Dorsolateral prefrontal cortex (tissue), 120 donors: ENCODE measurements at regions of chr20 and their contacts with region 1.

Region 1: GRCh38 chr20:3051385-3052019 is 5.7 kb downstream of the MRPS26 start:
- DNase-seq: no peak
- H3K4me3 ChIP-seq: no peak overlapping the region
- H3K27ac ChIP-seq: peak overlapping the region in 1 of 59 donors; percentile 11
- H3K27me3 ChIP-seq: no peaks in the 10 kb centered on the region
- CTCF ChIP-seq: no peak

Region 2: GRCh38 chr20:2922957-2923356 is 128.5 kb before region 1 on chr20:
- intact Hi-C with region 1: no loop called
- DNase-seq: no peak
- H3K4me3 ChIP-seq: no peak overlapping the region
- H3K27ac ChIP-seq: no peak overlapping the region
- H3K27me3 ChIP-seq: no peaks in the 10 kb centered on the region
- CTCF ChIP-seq: no peak

Region 3: DNA sequence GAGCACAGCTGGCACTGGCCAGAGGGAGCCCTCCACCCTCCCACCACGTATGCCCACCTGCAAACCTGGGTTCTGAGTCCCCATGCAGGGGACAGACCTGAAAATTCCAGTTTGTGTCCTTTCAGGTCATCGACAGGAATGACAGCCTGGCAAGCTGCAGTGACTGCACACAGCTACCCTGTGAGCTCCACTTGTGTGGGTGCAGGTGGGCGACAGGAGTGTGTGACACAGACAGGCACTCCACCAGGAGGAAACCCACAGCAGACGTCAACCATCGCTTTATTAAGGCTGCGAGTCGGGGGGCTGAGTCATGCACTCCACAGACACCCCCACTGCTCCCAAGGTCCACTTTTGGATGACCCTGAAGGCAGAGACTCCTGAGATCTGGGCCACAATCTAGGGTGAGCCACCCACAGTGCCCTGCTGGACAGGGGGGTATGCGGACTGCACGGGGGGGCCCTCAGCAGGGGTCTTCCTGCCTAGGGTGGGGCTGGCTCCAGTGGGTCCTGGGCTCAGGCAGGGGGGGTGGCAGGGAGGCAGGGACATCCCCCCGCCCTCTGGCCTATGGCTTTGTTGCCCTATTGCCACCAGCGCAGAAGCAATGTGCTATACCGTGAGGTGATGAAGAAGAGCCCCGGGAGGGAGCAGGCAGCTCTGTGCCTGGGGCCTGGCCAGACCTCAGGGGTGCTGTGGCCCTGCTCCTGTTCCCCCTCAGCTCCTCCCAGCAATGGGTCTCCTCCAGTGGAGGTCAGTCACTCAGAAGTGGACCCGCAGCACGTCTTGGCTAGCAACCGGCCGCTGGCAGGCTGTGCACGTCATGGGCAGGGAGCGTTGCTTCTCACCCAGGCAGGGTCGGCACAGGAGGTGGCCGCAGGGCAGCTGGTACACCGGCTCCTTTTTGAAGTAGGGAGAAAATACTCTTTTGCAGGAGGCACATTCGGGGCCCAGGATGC is 58.1 kb after region 1 on chr20:
- intact Hi-C with region 1: loop called (anchors 5 kb)
- DNase-seq: peak in 6 of 10 donors; percentile 51 to 83 (median 63)
- H3K4me3 ChIP-seq: no peak overlapping the region
- H3K27ac ChIP-seq: peak overlapping the region in 53 of 59 donors; percentile 3 to 85 (median 64)
- H3K27me3 ChIP-seq: no peaks in the 10 kb centered on the region
- CTCF ChIP-seq: no peak

Region 4: DNA sequence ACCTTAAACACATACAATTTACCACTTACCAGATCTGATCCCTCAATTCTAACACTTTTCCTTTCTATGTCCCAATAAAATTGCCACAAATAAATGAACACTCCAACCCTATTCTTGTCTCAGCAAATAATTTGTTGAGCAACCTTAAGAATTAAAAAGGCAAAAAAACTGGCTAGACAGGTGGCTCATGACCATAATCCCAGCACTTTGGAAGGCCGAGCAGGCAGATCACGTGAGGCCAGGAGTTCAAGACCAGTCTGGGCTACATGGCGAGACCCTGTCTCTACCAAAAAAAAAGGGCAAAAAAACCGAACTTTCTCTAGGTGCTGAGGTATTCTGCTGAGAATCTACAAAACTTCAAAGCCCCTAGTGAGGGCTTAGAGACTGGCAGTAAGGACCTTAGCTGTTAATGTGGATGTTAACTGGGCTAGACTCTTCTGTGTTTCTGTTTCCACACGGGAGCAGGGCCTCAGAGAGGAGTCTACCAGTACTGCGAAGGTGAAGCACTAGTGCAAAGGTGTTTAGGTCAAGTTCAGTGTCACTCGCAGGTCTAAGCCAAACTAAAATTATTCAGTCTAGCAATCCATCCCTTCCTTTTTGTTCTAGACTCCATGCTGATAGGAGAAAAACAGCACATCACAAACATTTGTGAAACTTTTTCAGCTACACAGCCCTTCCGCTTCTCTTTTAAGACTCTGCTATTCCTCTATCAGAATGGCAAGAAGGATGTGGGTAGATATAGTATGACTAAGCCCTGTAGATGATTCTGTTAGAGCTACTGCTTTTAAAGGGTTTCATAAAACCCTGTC is 105.5 kb after region 1 on chr20:
- intact Hi-C with region 1: loop called in 1 of 2 experiments (anchors 5 kb)
- DNase-seq: no peak
- H3K4me3 ChIP-seq: peak overlapping the region in 24 of 59 donors; percentile 7 to 99 (median 95)
- H3K27ac ChIP-seq: peak overlapping the region in 1 of 59 donors; percentile 6
- H3K27me3 ChIP-seq: no peaks in the 10 kb centered on the region
- CTCF ChIP-seq: no peak

Region 5: DNA sequence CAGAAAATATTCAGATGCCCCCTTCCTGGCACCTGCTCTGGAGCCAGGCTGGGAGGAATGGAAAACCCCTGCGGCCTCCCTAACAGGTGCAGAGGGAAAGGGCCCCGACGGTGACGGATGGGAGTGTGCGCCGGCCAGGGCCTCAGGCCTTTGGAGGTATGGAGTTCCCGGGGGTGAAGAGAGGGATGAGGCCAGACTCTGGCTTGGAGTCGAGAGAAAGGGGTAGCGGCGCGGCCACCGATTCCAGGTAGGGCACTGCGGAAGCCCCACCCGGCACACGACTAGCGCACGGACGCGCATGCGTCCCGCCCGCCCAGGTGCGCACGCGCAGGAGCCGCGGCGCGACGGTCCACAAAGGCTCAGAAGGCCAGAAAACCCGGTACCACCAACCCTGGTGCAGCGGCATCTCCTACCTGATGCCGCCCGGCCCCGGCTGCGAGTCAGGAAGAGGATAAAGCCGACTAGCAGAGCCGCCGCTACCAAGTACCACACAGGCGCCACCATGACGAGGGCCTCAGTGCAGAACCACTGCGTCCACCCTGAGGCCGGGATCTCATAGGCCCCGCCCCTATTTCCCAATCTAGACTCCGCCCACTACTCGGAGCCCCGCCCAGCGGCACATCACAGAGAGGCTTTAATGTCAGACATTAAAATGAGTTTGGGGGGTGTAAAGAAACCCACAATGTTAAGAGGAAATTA is 152.8 kb after region 1 on chr20 and contains the start of gene DDRGK1:
- intact Hi-C with region 1: loop called in 1 of 2 experiments (anchors 10 kb)
- DNase-seq: peak; percentile 80 to 93 (median 89)
- H3K4me3 ChIP-seq: peak within 1 kb of the TSS; percentile 61 to 99 (median 91)
- H3K27ac ChIP-seq: peak within 1 kb of the TSS; percentile 58 to 97 (median 89)
- H3K27me3 ChIP-seq: no peaks in the 10 kb centered on the region
- CTCF ChIP-seq: peak in 19 of 56 donors; percentile 8 to 44 (median 20)
- total RNA-seq, gene DDRGK1: 98.5 to 184 (median 132) TPM

Region 6: DNA sequence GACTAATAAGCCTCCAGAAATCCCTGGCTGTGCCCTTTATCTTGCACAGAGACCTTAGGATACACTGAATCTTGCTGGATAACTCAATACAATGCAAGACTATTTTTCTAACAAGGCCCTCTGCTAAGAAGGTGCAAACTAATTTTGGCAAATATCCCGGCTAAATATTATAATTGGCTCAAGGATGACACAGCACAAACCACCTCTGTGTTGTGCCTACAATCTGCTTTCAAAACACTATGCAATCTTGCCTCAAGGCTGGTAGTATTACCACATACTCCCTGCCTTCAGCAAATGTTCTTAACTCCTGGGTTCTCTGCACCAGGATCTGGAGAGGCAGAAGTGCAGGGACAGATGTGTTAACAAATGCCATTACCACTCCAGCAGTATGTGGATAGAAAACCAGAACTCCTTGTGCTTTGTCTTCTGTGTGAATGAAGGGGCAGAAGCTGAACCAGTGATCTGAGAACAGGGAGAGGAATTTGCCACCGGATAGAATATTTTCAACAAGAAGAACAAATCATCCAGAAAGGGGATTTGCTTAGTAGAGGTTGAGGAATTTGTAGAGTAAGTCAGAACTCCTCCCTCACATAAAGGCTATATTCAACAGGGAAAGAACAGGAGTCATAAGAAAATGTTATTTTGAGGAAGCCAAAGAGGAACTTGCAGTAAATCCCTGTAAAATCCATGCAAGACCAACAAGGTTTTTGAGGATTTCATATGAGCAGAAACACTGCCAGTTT is 261.6 kb after region 1 on chr20:
- intact Hi-C with region 1: loop called in 1 of 2 experiments (anchors 2 kb)
- DNase-seq: no peak
- H3K4me3 ChIP-seq: no peak overlapping the region
- H3K27ac ChIP-seq: peak overlapping the region in 56 of 59 donors; percentile 0 to 87 (median 74)
- H3K27me3 ChIP-seq: no peaks in the 10 kb centered on the region
- CTCF ChIP-seq: no peak